Colonic mucosa (tissue), 4 donors: ENCODE measurements at regions of chr20 and their contacts with region 1.

Region 1: GRCh38 chr20:45771182-45771759 is 20.4 kb downstream of the WFDC3 start:
- DNase-seq: peak; percentile 91
- H3K4me3 ChIP-seq: no peak overlapping the region
- H3K27ac ChIP-seq: peak overlapping the region; percentile 4
- H3K4me1 ChIP-seq: no peaks in the 10 kb centered on the region
- H3K27me3 ChIP-seq: no peaks in the 10 kb centered on the region
- CTCF ChIP-seq: peak; percentile 94

Region 2: DNA sequence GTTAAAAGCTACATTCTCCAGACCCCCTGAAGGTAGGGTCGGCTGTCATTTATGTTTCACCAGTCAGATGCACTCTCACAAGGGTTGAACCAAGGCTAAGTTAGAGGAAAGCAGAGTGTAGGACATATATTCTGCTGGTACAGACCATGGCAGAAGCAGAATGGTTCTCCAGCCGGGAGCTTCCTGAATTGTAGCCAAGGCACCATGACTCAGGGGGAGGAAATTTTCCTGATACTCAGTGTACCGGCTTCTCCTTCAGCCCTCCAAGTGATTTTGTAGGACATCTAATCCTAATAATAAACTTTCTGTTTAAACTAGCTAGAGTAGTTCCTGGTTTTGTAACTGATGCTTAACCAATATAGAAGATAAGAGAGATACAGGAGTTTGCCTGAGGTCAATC is 502.7 kb before region 1 on chr20:
- intact Hi-C with region 1: no loop called
- DNase-seq: no peak
- H3K4me3 ChIP-seq: no peak overlapping the region
- H3K27ac ChIP-seq: no peak overlapping the region
- H3K4me1 ChIP-seq: no peaks in the 10 kb centered on the region
- H3K27me3 ChIP-seq: no peaks in the 10 kb centered on the region
- CTCF ChIP-seq: no peak

Region 3: DNA sequence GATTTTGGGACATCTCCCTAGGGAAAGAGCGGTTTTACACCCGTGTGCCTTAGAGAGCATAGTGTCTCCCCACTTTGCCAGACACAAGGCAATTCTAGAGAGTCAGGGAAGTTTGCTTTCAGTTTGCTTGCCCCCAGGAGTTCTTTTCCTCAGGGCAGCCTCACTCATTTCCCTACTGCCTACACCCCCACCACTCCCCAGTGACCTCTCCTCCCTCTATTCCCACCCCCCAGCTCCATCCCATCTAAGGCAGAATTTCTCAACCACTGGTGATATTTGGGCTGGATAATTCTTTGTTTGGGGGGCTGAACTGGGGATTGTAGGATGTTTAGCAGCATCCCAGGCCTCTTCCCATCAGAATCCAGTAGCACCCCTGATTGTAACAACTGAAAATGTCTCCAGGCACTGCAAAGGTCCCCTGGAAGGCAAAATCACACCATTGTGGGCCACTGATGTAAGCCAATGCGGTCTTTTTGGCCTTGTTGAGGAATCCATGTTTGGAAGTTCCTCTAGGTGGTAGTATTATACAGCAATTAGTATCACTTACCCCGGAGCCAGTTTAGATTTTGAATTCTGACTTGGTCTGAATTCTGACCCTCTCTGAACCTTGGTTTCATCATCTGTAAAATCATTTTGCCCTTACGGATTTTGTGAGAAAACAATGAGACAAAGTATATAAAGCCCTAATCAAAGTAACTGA is 225.4 kb before region 1 on chr20:
- intact Hi-C with region 1: loop called (anchors 2 kb)
- DNase-seq: no peak
- H3K4me3 ChIP-seq: no peak overlapping the region
- H3K27ac ChIP-seq: no peak overlapping the region
- H3K4me1 ChIP-seq: no peaks in the 10 kb centered on the region
- H3K27me3 ChIP-seq: no peaks in the 10 kb centered on the region
- CTCF ChIP-seq: no peak

Region 4: GRCh38 chr20:45592574-45593189 is 178.6 kb before region 1 on chr20:
- intact Hi-C with region 1: loop called (anchors 5 kb)
- DNase-seq: peak; percentile 32
- H3K4me3 ChIP-seq: no peak overlapping the region
- H3K27ac ChIP-seq: no peak overlapping the region
- H3K4me1 ChIP-seq: no peaks in the 10 kb centered on the region
- H3K27me3 ChIP-seq: no peaks in the 10 kb centered on the region
- CTCF ChIP-seq: peak; percentile 53